Calu3 (cell line): ENCODE measurements at regions of chr7 and their contacts with region 1.

Region 1: DNA sequence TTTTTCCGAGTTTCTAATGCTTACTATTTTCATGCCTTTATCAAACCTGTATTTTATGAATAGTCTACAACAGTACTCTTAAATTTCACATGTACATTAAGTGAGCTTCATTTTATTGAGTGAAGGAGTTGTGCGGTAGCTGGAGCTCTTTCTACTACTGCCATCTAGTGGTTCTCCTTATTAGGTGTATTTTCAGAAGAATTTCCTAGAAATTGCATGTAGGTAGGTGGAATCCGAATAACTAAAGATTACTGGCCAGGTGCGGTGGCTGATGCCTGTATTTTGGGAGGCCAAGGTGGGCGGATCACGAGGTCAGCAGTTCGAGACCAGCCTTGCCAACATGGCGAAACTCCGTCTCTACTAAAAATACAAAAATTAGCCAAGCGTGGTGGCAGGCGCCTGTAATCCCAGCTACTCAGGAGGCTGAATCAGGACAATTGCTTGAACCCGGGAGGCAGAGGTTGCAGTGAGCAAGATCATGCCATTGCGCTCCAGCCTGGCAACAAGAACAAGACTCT is 38.3 kb downstream of the LRRC72 start:
- DNase-seq: peak; percentile 34
- H3K4me3 Mint-ChIP-seq: no peak overlapping the region
- H3K27ac Mint-ChIP-seq: no peak overlapping the region
- H3K4me1 Mint-ChIP-seq: peaks cover 13% of the 10 kb centered on the region
- H3K27me3 Mint-ChIP-seq: no peaks in the 10 kb centered on the region
- CTCF ChIP-seq: peak; percentile 66

Region 2: GRCh38 chr7:16078076-16078952 is 486.7 kb before region 1 on chr7:
- CTCF ChIA-PET with region 1: interaction called, 29 read pairs
- intact Hi-C with region 1: loop called (anchors 1 kb)
- DNase-seq: peak; percentile 78
- H3K4me3 Mint-ChIP-seq: no peak overlapping the region
- H3K27ac Mint-ChIP-seq: peak overlapping the region; percentile 71
- H3K4me1 Mint-ChIP-seq: peaks cover 31% of the 10 kb centered on the region
- H3K27me3 Mint-ChIP-seq: no peaks in the 10 kb centered on the region
- CTCF ChIP-seq: peak; percentile 92

Region 3: DNA sequence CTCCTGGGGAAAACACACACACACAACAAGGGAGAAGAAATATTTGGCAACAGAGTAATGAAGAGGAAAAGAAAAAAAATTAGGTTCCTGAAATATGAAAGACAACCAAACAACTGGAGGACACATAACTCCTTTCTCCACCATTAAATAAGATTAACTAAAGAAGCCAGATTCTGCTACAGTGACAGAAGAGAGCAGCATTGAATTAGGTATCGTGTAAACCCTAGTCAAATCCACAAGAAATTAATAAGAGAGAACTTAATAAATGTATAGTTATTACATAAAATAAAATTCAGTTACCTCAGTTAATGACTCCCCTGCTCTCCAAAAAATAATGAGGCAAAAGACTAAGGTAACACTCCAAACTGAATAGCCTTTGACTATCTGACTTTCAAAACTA is 450.3 kb before region 1 on chr7:
- CTCF ChIA-PET with region 1: interaction called, 8 read pairs
- intact Hi-C with region 1: loop called (anchors 1 kb)
- DNase-seq: peak; percentile 34
- H3K4me3 Mint-ChIP-seq: no peak overlapping the region
- H3K27ac Mint-ChIP-seq: peak overlapping the region; percentile 21
- H3K4me1 Mint-ChIP-seq: peaks cover 24% of the 10 kb centered on the region
- H3K27me3 Mint-ChIP-seq: no peaks in the 10 kb centered on the region
- CTCF ChIP-seq: peak; percentile 71

Region 4: DNA sequence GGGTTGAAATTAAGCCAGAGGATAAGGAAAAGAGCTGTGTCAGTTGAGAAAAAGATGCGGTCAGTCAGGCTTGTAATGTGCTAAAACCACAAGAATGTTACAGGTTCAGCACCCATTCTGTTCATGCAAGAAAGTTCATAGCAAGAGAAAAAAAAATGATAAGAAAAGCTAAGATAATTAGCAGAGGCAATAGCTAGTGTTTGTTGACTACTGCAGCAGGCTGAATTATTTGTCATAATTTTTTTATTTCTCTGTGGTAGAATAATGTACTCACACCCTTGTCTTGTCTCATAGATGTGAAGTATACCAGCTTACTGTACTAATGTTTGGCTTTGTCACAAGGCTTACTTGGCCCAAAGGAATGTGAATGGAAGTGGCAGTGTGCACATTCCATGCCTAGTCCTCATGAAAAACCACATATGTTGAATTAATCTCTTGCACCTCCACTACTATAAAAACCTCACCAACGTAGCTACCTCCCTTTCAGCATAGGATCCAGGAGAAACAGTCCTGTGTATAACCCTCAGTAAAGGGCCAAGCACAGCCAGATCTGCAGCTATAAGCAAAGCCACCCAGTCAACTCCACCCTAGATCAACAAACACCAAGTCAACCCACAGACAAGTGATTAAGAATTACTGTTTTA is 218.5 kb before region 1 on chr7:
- CTCF ChIA-PET with region 1: interaction called, 6 read pairs
- intact Hi-C with region 1: loop called (anchors 2 kb)
- DNase-seq: peak; percentile 63
- H3K4me3 Mint-ChIP-seq: peak overlapping the region; percentile 8
- H3K27ac Mint-ChIP-seq: peak overlapping the region; percentile 48
- H3K4me1 Mint-ChIP-seq: peaks cover 57% of the 10 kb centered on the region
- H3K27me3 Mint-ChIP-seq: no peaks in the 10 kb centered on the region
- CTCF ChIP-seq: no peak

Region 5: DNA sequence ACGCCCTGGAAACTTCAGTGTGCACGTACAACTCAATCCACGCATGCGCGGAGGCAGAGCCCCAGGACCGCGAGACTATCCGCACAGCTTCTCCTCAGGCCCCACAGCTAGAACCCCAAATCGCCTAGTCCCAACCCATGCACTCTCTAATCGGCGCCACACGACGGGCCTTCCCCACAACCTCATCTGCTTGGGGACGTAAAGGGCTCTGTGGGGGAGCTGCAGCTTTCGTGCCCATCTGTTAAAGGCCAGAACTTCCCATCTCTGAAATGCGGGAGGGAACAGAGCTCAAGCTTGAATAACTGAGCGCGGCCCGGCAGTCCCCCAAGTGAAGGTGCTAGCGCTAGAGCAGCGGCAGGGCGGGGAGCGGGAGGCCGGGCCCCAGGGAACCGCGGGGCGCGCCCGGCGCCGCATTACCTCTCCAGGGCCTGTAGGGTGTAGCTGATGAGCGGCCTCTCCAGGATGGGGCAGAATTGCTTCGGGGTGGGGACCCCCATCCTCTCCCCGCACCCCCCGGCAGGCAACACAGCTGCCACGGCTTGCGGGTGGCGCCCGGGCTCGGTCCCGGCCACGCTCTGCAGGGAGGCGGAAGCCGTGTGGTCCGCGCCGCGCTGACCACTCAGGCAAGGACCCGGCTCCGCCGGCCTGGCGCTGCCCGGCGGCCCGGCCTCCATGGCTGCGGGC is 144.2 kb before region 1 on chr7:
- CTCF ChIA-PET with region 1: interaction called, 20 read pairs
- intact Hi-C with region 1: no loop called
- DNase-seq: peak; percentile 93
- H3K4me3 Mint-ChIP-seq: peak overlapping the region; percentile 74
- H3K27ac Mint-ChIP-seq: peak overlapping the region; percentile 86
- H3K4me1 Mint-ChIP-seq: peaks cover 53% of the 10 kb centered on the region
- H3K27me3 Mint-ChIP-seq: no peaks in the 10 kb centered on the region
- CTCF ChIP-seq: peak; percentile 67

Region 6: GRCh38 chr7:16465469-16466361 is 99.3 kb before region 1 on chr7 and contains the start of gene SOSTDC1:
- CTCF ChIA-PET with region 1: interaction called, 12 read pairs
- intact Hi-C with region 1: no loop called
- DNase-seq: peak; percentile 23
- H3K4me3 Mint-ChIP-seq: peak within 1 kb of the TSS; percentile 55
- H3K27ac Mint-ChIP-seq: peak within 1 kb of the TSS; percentile 9
- H3K4me1 Mint-ChIP-seq: peaks cover 25% of the 10 kb centered on the region
- H3K27me3 Mint-ChIP-seq: no peaks in the 10 kb centered on the region
- CTCF ChIP-seq: no peak
- total RNA-seq, gene SOSTDC1: 13.9 and 22.1 TPM in 2 replicates

Region 7: DNA sequence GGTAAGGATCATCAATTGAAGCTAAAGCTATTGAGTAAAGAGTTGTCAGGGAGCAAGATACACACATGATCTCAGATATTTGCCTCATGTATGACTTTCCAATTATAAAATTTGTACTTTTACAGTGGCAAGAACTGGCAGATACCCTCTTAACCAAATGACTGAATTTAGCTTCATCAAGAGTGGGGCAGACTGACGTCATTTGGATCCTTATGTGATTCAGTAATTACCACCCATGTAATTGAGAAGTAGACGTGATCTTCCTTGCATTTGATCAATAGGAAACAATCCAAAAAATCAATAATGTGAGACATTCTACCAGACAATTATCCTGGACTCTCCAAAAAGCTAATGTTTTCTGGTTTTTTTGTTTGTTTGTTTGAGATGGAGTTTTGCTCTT is 29.5 kb before region 1 on chr7:
- CTCF ChIA-PET with region 1: no interaction called
- intact Hi-C with region 1: no loop called
- DNase-seq: no peak
- H3K4me3 Mint-ChIP-seq: no peak overlapping the region
- H3K27ac Mint-ChIP-seq: no peak overlapping the region
- H3K4me1 Mint-ChIP-seq: no peaks in the 10 kb centered on the region
- H3K27me3 Mint-ChIP-seq: no peaks in the 10 kb centered on the region
- CTCF ChIP-seq: no peak

Region 8: DNA sequence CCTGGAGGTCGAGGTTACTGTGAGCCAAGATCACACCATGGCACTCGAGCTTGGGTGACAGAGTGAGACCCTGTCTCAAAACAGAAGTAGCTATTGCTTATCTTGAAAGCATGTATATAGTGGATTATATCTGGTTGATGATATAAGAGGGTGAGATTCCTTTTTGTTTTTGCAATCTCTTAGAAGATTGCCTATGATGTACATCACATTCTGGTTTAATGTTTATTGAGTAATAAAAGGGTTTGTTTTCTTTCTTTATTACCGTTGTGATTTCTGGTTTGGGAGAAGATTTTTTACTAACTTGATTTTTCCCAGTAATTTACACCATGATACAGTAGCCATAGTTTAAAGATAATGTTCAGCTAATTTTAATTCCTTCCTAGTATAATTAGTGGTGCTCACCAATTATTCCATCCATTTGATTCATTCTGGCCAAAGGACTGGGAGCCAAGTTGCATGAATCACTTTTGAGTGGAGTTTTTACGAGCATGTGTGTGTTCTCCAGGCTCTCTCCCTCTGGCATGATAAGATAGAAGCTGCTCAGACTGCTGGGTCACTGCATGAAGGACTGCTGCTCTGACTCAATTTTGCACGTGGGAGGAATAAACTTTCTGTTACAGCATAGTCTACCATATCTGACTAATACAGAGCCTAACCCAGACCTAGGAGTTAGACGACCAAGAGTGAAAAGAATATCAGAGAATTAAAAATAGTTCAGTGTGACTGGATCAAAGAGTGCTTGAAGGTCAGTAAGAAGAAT is 175.1 kb after region 1 on chr7:
- CTCF ChIA-PET with region 1: no interaction called
- intact Hi-C with region 1: no loop called
- DNase-seq: no peak
- H3K4me3 Mint-ChIP-seq: no peak overlapping the region
- H3K27ac Mint-ChIP-seq: no peak overlapping the region
- H3K4me1 Mint-ChIP-seq: peaks cover 25% of the 10 kb centered on the region
- H3K27me3 Mint-ChIP-seq: no peaks in the 10 kb centered on the region
- CTCF ChIP-seq: no peak